Colonic mucosa (tissue), 4 donors: ENCODE measurements at regions of chr10 and their contacts with region 1.

Region 1: GRCh38 chr10:43105102-43105785 is 28.4 kb downstream of the RET start:
- DNase-seq: peak; percentile 70
- H3K4me3 ChIP-seq: peak overlapping the region; percentile 52
- H3K27ac ChIP-seq: no peak overlapping the region
- H3K4me1 ChIP-seq: peaks cover 7% of the 10 kb centered on the region
- H3K27me3 ChIP-seq: peaks cover 12% of the 10 kb centered on the region
- CTCF ChIP-seq: peak; percentile 100

Region 2: DNA sequence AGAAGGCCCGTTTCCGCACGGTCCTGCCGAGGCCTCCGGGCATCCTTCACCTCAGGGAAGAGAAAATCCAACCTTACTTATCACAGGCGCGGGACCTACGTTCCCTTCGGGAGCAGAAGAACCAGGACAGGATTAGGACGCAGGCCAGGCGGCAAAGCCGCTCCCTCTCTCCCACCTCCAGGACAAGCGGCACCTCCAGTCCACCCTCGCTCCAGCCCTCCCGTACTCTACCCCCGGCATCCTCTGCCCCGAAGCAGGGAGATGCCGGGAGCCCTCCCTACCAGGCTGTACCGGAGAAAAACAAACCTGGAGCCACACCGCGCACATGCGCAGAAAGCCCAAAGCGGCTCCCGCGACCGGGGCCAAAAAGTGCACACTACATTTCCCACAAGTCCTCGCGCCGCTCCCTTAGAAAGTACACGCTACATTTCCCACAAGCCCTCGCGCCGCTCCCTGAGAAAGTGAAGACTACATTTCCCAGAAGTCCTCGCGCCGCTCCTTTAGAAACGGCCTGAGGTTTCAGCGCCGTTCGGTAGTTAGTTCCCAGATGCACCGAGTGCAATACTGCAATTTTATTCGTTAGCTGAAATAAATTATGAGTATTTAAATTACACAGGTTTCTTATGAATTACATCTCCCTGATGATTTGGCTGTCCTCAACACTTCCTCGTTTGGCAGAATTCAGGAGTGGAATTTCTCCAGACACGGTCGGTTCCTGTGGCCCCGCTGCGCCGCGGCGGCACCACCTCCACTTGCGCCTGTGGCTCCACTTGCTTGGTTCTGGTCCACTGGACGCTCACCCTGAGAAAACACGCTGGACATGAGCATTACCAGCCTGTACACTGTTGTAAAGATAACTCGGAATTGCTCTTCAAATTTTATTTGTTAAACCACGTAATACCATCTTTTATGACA is 552.5 kb before region 1 on chr10:
- intact Hi-C with region 1: loop called (anchors 10 kb)
- DNase-seq: peak; percentile 98
- H3K4me3 ChIP-seq: peak overlapping the region; percentile 91
- H3K27ac ChIP-seq: peak overlapping the region; percentile 56
- H3K4me1 ChIP-seq: peaks cover 5% of the 10 kb centered on the region
- H3K27me3 ChIP-seq: no peaks in the 10 kb centered on the region
- CTCF ChIP-seq: no peak

Region 3: DNA sequence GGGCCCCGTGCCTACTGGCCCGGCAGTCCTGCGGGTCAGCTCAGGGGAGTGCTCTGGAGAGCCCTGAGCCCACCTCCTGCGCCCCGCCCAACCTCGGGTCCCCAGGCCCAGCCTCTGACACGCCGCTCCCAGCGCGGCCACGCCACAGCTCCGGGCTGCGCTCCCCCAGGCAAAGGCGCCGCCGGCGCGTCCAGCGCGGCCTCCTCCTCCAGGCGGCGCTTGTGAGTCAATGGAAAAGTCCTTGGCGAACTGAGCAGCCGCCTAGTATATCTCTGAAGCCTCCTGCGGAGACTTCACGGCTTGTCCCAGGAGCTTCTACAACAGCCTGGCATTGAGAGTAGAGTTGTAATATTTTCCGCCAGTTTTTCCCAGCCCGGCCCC is 352.1 kb before region 1 on chr10:
- intact Hi-C with region 1: loop called (anchors 10 kb)
- DNase-seq: peak; percentile 88
- H3K4me3 ChIP-seq: peak overlapping the region; percentile 31
- H3K27ac ChIP-seq: no peak overlapping the region
- H3K4me1 ChIP-seq: peaks cover 10% of the 10 kb centered on the region
- H3K27me3 ChIP-seq: peaks cover 29% of the 10 kb centered on the region
- CTCF ChIP-seq: peak; percentile 76

Region 4: DNA sequence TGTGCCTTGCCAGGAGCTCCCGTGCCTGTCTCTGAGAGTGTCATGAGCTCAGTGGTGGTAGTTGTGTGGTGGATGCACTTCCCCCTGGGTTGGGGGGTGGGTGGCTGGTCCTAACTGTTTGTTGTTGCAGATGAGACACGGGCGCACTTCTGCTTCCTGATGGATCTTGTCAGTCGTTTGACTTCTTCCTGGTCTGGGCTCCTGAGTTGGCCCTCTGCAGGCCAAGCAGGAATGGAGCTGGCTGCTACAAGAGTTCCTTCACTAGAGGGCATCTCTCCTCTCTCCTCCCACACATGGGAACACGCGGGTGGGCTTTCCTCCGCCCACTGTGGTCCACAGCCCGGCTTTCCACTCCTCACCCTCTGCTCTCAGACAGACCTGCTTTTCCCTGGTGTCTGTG is 240.7 kb before region 1 on chr10:
- intact Hi-C with region 1: loop called (anchors 2 kb)
- DNase-seq: no peak
- H3K4me3 ChIP-seq: no peak overlapping the region
- H3K27ac ChIP-seq: no peak overlapping the region
- H3K4me1 ChIP-seq: peaks cover 5% of the 10 kb centered on the region
- H3K27me3 ChIP-seq: peaks cover 8% of the 10 kb centered on the region
- CTCF ChIP-seq: no peak

Region 5: DNA sequence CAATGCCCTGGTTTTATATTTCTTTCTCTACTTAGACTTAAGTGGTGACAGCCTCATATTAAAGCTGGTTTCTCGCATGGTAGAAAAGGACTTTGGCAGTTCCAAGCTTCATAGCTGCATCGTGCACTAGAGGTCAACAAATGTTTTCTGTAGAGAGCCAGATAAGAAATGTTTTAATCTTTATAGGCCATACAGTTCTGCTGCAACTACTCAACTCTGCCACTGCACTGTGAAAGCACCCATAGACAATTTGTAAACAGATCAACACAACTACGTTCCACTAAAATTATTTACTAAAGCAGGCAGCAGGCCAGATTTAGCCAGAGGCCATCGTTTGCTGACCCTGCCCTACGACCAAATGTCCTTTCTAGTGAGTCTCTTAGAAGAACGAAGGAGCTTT is 69.7 kb after region 1 on chr10:
- intact Hi-C with region 1: no loop called
- DNase-seq: no peak
- H3K4me3 ChIP-seq: no peak overlapping the region
- H3K27ac ChIP-seq: no peak overlapping the region
- H3K4me1 ChIP-seq: peaks cover 9% of the 10 kb centered on the region
- H3K27me3 ChIP-seq: no peaks in the 10 kb centered on the region
- CTCF ChIP-seq: no peak